CD4-positive, alpha-beta memory T cell (primary cell): ENCODE measurements at regions of chr17 and their contacts with region 1.

Region 1: DNA sequence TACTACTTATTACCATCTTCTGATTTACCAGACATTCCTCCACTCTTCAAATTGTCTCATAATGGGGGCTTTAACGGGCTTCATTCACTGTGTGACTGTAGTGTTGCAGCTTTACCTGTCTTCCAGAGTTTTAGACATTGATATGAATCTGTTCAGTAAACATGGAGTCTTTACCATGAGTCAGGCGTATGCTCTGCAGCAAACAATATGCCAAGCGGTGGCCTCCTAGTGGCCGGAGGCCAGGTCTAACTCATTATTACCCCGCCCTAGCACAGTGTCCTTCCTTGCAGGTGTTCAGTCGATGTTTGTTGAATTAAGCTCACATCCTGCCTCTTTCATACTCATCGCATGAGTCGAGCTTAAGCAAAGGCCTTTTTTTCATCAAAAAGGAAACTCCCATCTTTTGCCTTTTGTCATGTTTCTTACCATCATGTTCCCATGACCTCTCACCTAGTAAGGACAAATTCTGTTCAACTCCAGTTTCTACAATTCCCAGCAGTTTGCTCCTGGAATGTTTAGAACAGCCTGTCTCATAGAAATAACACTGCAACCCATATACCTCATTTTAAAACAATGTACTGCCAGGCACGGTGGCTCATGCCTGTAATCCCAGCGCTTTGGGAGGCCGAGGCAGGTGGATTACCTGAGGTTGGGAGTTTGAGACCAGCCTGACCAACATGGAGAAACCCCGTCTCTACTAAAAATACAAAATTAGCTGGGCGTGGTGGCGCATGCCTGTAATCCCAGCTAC is 39.4 kb downstream of the TUBD1 start:
- DNase-seq: peak; percentile 63 to 79 (median 69)
- H3K4me3 ChIP-seq: no peak overlapping the region
- H3K4me3 Mint-ChIP-seq: peak overlapping the region in 6 of 8 donors; percentile 1 to 75 (median 29)
- H3K27ac ChIP-seq: no peak overlapping the region
- H3K27ac Mint-ChIP-seq: peak overlapping the region; percentile 35 to 93 (median 71)
- H3K4me1 ChIP-seq: peaks cover 43% of the 10 kb centered on the region
- H3K4me1 Mint-ChIP-seq: peaks cover 23 to 35% (median 30%) of the 10 kb centered on the region in 4 donors
- H3K27me3 ChIP-seq: no peaks in the 10 kb centered on the region
- H3K27me3 Mint-ChIP-seq: no peaks in the 10 kb centered on the region

Region 2: DNA sequence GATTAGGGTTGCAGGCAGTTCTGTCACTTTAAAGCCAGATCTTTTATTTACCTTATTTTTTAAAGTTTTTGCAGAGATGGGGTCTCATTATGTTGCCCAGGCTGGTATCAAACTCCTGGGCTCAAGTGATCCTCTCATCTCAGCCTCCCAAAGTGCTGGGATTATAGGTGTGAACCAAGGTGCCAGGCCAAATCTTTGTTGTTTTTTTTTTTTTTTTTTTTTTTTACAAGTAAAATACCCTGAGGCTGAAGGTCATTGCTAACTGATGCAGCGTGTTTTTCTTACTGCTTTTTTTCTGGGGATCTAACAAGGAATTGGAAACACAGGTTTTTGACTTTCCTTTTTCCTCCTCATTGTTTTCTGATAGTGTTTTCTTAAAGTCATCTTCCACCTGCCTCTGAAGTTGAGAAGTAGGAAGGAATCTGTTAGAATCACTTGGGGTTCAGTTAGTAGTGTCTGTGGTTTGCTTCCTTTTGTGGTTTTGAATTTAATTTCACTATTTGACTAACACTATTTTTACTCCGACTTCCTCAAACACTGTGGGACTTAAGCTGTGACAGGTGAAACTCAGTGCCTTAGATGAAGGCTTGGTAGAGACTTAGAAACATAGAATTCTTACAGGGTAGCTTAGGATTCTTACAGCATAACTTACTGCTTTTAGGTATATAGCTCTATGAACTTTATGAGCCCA is 211.4 kb before region 1 on chr17:
- CTCF ChIA-PET with region 1: no interaction called
- POLR2A ChIA-PET with region 1: no interaction called
- intact Hi-C with region 1: no loop called
- DNase-seq: peak in 4 of 5 donors; percentile 32 to 42 (median 34)
- H3K4me3 ChIP-seq: no peak overlapping the region
- H3K4me3 Mint-ChIP-seq: peak overlapping the region; percentile 49 to 77 (median 71)
- H3K27ac ChIP-seq: no peak overlapping the region
- H3K27ac Mint-ChIP-seq: peak overlapping the region in 6 of 7 donors; percentile 7 to 81 (median 72)
- H3K4me1 ChIP-seq: peaks cover 57% of the 10 kb centered on the region
- H3K4me1 Mint-ChIP-seq: peaks cover 39 to 67% (median 52%) of the 10 kb centered on the region in 4 donors
- H3K27me3 ChIP-seq: no peaks in the 10 kb centered on the region
- H3K27me3 Mint-ChIP-seq: no peaks in the 10 kb centered on the region

Region 3: DNA sequence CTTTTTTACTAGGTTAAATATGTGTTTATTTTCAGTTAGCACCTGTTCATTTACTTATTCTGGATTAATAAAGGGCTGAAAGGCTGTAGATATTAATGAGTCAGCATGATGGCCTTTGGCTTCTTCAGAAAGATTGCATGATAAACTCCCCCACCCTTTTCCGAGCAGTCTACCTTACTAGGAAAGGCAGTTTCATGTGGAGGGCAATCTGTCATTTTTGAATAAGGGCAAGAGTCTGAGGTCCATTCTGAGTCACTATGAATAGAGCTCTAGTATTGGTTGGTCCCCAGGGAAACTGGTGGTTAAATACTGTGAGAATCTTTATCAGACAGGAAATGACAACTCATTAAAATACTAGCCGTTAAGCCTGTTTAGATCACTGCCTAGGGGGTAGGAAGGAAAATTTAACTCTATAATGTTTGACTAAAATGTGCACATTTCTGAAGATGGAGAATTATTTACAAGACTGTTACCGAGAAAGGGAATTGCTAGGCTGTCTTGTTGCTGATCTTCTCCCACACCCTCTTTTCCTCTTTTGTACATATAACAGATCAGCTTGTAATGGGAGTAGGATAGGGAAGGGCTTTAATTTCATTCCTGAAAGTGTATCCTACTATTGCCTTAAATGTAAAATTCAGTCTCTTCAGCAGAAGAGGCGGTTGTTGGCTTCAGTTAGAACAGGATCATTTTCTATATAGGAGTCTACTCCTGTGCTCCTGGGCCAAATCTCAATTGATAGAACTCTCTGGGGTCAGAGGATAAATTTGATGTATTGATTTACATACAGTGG is 23.9 kb before region 1 on chr17:
- CTCF ChIA-PET with region 1: interaction called, 9 read pairs
- POLR2A ChIA-PET with region 1: interaction called, 18 read pairs
- intact Hi-C with region 1: no loop called
- DNase-seq: peak; percentile 36 to 83 (median 44)
- H3K4me3 ChIP-seq: peak overlapping the region in 1 of 2 donors; percentile 34
- H3K4me3 Mint-ChIP-seq: peak overlapping the region; percentile 71 to 88 (median 78)
- H3K27ac ChIP-seq: peak overlapping the region; percentile 74
- H3K27ac Mint-ChIP-seq: peak overlapping the region; percentile 89 to 97 (median 96)
- H3K4me1 ChIP-seq: peaks cover 78% of the 10 kb centered on the region
- H3K4me1 Mint-ChIP-seq: peaks cover 56 to 76% (median 65%) of the 10 kb centered on the region in 4 donors
- H3K27me3 ChIP-seq: no peaks in the 10 kb centered on the region
- H3K27me3 Mint-ChIP-seq: no peaks in the 10 kb centered on the region

Region 4: DNA sequence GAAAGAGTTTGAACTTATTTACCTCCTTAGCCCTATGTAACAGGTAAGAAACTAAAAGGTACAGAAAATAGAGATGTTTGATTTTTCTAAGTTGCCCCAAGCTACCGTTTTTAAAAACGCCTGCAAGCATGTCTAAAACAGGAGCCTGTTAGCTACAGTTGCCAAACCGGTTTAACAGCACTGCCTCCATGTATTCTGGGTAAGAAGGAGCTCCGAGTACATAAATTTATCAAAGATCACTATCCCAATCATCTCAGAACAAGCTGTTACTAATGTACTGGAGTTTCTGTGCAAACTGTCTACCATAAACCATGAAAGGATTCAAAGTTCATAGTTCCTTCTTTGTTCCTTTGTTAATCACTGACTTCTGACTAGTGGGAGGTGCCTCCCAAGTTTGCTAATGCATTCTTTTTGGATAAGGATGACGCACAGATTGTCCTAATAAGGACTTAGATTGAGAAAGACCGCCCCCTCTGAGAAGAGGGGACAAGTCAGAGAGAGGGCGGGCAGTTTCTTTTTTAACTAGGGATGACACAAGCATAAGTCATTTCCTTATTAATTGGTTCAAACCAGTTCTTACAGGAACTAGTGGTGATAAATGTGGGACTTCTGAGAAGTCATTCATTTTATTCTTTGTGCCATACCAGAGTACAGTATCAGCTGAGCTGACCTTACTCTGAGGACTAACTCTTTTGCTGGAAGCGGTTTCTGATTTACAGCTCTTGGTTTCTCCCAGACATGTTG is 15.9 kb before region 1 on chr17:
- CTCF ChIA-PET with region 1: interaction called, 28 read pairs
- POLR2A ChIA-PET with region 1: interaction called, 3 read pairs
- intact Hi-C with region 1: loop called (anchors 1 kb)
- DNase-seq: peak; percentile 84 to 95 (median 91)
- H3K4me3 ChIP-seq: peak overlapping the region; percentile 78 to 94
- H3K4me3 Mint-ChIP-seq: peak overlapping the region; percentile 94 to 100 (median 97)
- H3K27ac ChIP-seq: peak overlapping the region; percentile 93
- H3K27ac Mint-ChIP-seq: peak overlapping the region; percentile 96 to 99 (median 98)
- H3K4me1 ChIP-seq: peaks cover 19% of the 10 kb centered on the region
- H3K4me1 Mint-ChIP-seq: peaks cover 23 to 59% (median 35%) of the 10 kb centered on the region in 4 donors
- H3K27me3 ChIP-seq: no peaks in the 10 kb centered on the region
- H3K27me3 Mint-ChIP-seq: no peaks in the 10 kb centered on the region